Endothelial cell of umbilical vein (primary cell): ENCODE measurements at regions of chr17 and their contacts with region 1.

Region 1: DNA sequence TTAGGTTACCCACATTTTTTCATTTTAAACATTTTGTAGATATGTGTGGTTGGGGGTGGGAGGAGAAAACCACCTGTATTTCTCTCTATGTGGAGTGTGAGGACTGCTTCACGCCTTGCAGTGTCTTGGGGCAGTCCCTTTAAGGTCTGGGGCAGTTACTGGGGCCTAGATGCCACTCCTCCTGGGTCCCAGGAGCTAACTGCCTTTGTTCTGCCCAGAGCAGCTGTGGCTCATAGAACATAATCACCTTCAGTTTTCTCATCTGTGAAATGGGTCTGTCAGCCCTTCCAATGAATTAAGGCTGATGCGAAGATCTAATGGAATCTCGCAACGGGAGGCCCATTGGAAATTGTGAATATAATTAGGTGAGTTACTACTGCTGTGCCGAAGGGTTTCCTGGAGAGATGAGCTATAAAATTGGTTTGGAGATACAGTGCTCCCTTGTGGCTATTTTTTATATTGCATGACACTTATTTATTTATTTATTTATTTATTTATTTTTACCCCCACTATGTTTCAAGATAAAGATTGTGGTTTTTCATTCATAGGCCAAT is 22.9 kb downstream of the DHRS7C start:
- DNase-seq: no peak
- H3K4me3 ChIP-seq: no peak overlapping the region
- H3K27ac ChIP-seq: no peak overlapping the region
- H3K4me1 ChIP-seq: no peaks in the 10 kb centered on the region
- H3K27me3 ChIP-seq: no peaks in the 10 kb centered on the region
- CTCF ChIP-seq: peak in 1 of 2 donors; percentile 13
- POLR2A ChIP-seq: no peak

Region 2: GRCh38 chr17:9575381-9576101 is 192.9 kb before region 1 on chr17 and contains the start of gene STX8:
- CTCF ChIA-PET with region 1: interaction called, 28 read pairs
- POLR2A ChIA-PET with region 1: no interaction called
- dilution Hi-C with region 1: no loop called
- intact Hi-C with region 1: loop called (anchors 1 kb)
- DNase-seq: peak; percentile 90
- H3K4me3 ChIP-seq: peak within 1 kb of the TSS; percentile 59 to 89 (median 76)
- H3K27ac ChIP-seq: peak within 1 kb of the TSS; percentile 8
- H3K4me1 ChIP-seq: peaks cover 19% of the 10 kb centered on the region
- H3K27me3 ChIP-seq: no peaks in the 10 kb centered on the region
- CTCF ChIP-seq: no peak
- POLR2A ChIP-seq: no peak
- total RNA-seq, gene STX8: 67.3 and 68.0 TPM in 2 replicates

Region 3: DNA sequence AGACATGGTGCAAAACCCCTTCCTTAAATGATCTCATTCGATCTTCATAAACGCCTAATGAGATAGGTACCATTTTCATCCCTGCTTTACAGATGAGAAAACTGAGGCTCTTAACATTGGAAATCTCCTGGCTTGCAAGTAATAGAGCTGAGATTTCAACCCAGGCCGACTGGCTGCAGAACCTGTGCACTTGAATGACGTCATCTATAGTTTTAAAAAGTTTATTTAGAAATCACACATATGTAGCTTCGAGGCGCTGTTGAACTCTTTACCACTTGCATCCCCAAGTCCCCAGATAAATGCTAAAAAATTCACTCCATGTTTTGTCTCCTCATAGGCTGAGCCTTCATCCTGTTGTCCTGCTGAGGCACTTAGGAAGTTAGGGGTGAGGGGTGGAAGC is 162.0 kb before region 1 on chr17:
- CTCF ChIA-PET with region 1: no interaction called
- POLR2A ChIA-PET with region 1: no interaction called
- dilution Hi-C with region 1: no loop called
- intact Hi-C with region 1: no loop called
- DNase-seq: no peak
- H3K4me3 ChIP-seq: no peak overlapping the region
- H3K27ac ChIP-seq: no peak overlapping the region
- H3K4me1 ChIP-seq: no peaks in the 10 kb centered on the region
- H3K27me3 ChIP-seq: no peaks in the 10 kb centered on the region
- CTCF ChIP-seq: no peak
- POLR2A ChIP-seq: no peak

Region 4: DNA sequence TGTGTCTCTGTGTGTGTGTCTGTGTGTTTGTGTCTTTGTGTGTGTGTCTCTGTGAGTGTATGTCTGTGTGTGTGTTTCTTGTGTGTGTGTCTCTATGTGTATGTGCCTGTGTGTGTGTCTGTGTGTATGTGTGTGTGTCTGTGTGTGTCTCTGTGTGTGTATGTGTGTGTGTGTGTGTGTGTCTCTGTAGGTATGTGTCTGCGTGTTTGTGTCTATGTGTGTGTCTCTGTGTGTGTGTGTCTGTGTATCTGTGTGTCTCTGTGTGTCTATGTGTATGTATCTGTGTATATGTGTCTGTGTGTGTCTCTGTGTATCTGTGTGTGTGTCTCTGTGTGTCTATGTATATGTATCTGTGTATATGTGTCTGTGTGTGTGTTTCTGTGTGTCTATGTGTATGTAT is 52.9 kb before region 1 on chr17:
- CTCF ChIA-PET with region 1: no interaction called
- POLR2A ChIA-PET with region 1: no interaction called
- dilution Hi-C with region 1: no loop called
- intact Hi-C with region 1: no loop called
- DNase-seq: no peak
- H3K4me3 ChIP-seq: no peak overlapping the region
- H3K27ac ChIP-seq: no peak overlapping the region
- H3K4me1 ChIP-seq: no peaks in the 10 kb centered on the region
- H3K27me3 ChIP-seq: no peaks in the 10 kb centered on the region
- CTCF ChIP-seq: no peak
- POLR2A ChIP-seq: no peak

Region 5: DNA sequence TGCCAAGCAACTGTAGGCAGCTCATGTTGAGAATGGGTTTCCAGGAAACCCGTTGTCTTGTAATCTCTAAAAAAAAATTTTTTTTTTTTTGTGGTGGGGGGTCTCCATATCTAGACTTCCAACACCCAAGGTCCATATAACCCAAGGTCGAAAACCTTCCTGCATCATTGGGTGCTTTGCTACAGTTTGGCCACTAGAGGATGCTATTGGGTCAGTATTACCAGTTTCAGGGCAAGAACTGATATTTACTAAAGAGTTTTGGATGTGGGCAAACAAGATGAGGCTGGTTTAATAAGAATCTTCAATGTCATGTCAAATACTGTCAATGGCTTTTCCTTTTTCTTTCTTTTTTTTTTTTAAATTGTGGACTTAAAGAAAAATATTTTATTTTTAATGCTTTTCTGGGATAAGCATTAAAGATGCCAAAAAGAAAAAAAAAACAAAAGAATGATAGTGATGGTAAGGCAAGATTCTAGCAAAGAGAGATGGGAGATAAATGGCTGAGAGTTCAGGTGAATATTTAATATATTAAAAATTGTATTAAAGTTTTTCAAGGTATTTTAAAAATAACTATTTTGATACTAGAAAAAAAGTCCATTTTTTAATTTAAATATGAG is 39.3 kb before region 1 on chr17:
- CTCF ChIA-PET with region 1: interaction called, 5 read pairs
- POLR2A ChIA-PET with region 1: no interaction called
- dilution Hi-C with region 1: no loop called
- intact Hi-C with region 1: loop called (anchors 1 kb)
- DNase-seq: peak; percentile 7
- H3K4me3 ChIP-seq: no peak overlapping the region
- H3K27ac ChIP-seq: no peak overlapping the region
- H3K4me1 ChIP-seq: no peaks in the 10 kb centered on the region
- H3K27me3 ChIP-seq: no peaks in the 10 kb centered on the region
- CTCF ChIP-seq: peak; percentile 74 to 85
- POLR2A ChIP-seq: no peak

Region 6: DNA sequence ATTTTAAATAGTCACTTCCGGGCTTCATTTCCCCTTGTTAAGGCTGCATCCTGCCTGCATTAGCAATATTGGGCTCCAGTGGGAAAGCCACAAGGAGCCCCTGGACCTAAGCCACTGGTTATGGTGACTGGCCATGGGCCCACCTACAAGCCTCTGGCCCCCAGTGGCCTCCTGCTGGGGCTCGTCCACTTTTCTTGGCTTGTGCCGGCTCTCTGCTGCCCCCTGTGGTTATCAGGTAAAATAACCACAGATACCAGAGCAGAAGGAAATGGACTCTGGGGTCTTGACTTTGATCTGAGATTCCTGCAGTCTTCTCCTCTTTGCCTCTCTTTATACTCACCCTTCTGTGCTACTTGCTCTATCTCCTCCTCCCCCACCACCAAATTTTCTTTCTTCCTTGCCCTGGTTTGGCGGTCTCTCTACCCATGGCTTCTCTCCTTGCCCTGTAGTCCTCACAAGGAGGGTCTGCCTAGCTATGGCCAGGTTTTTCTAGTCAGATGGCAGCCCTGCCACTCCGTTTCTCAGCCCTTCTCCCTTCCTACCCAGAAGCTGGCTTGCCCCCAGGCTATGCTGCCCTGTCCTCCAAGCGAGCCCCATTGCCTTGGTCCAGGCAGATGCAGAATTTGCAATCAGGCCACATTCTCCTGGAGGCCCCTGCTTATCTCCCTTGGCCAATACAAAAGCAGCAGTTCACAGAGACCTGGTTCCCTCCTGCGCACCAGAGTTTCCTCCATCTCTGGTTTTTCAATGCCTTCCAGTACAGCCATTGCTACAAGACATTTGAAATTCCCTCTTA is 219.5 kb after region 1 on chr17:
- CTCF ChIA-PET with region 1: no interaction called
- POLR2A ChIA-PET with region 1: no interaction called
- dilution Hi-C with region 1: no loop called
- intact Hi-C with region 1: no loop called
- DNase-seq: no peak
- H3K4me3 ChIP-seq: no peak overlapping the region
- H3K27ac ChIP-seq: no peak overlapping the region
- H3K4me1 ChIP-seq: no peaks in the 10 kb centered on the region
- H3K27me3 ChIP-seq: no peaks in the 10 kb centered on the region
- CTCF ChIP-seq: no peak
- POLR2A ChIP-seq: no peak